IMR-90 (cell line): ENCODE measurements at regions of chr1 and their contacts with region 1.

Region 1: DNA sequence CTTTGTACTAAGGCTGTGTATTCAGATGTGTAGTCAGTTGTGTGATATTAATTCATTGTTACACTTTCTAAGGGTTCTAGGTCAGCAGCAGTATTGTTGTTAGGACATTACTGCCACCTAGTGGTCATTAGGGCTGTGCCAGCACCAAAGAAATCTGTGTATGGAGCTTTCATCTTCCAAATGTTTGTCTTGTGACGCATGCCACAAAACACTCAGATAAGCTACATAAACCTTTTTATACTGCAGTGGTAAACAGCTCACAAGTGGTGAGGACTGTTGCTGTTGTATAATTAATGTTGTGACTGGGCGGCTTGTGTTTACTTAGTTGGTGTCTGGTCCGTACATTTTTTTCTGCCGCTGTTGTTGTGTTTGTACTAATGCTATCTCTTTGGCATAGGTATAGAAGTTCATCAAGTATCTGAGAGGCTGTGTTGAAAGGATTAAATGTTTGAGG is 51.7 kb downstream of the S1PR1 start:
- DNase-seq: peak; percentile 91
- ATAC-seq: peak; percentile 90
- H3K4me3 ChIP-seq: no peak overlapping the region; the same call in 1 of the 2 replicates
- H3K27ac ChIP-seq: no peak overlapping the region
- H3K4me1 ChIP-seq: peaks cover 2% of the 10 kb centered on the region; the same call in 1 of the 2 replicates
- H3K27me3 ChIP-seq: peaks cover under 1% of the 10 kb centered on the region; the same call in 1 of the 2 replicates
- CTCF ChIP-seq: peak; percentile 96
- POLR2A ChIP-seq: 0 out of 2 replicates have a peak, but pooled peaks have one; percentile 33
- RAD21 ChIP-seq: peak; percentile 90

Region 2: GRCh38 chr1:100921109-100921706 is 367.3 kb before region 1 on chr1:
- CTCF ChIA-PET with region 1: interaction called, 15 read pairs
- POLR2A ChIA-PET with region 1: no interaction called
- dilution Hi-C with region 1: no loop called
- in situ Hi-C with region 1: loop called (anchors 5 kb)
- intact Hi-C with region 1: loop called (anchors 1 kb)
- DNase-seq: peak; percentile 65
- ATAC-seq: peak; percentile 62
- H3K4me3 ChIP-seq: no peak overlapping the region
- H3K27ac ChIP-seq: no peak overlapping the region
- H3K4me1 ChIP-seq: no peaks in the 10 kb centered on the region
- H3K27me3 ChIP-seq: no peaks in the 10 kb centered on the region
- CTCF ChIP-seq: peak; percentile 71
- POLR2A ChIP-seq: no peak
- RAD21 ChIP-seq: peak; percentile 77

Region 3: DNA sequence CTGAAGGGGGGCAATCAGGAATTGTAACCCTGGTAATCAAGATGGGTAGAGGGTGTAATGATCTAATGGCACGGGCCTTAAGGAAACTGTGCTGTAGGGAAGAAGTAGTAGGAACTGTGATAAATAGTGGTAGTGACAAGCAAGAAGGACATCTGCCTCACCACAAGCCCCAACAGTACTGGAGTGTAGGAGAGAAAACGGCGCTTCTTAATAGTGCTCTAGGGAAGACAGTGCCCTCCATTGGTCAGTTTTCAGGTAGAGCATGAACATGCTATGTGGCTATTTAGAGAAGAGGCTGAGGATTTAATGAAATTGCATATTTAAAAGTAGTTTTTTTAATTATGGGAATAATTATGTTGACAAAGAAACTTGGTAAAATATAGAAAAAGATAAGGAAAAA is 360.4 kb before region 1 on chr1:
- CTCF ChIA-PET with region 1: interaction called, 15 read pairs
- POLR2A ChIA-PET with region 1: no interaction called
- dilution Hi-C with region 1: no loop called
- in situ Hi-C with region 1: loop called (anchors 5 kb)
- intact Hi-C with region 1: no loop called
- DNase-seq: no peak
- ATAC-seq: no peak
- H3K4me3 ChIP-seq: no peak overlapping the region
- H3K27ac ChIP-seq: no peak overlapping the region
- H3K4me1 ChIP-seq: no peaks in the 10 kb centered on the region
- H3K27me3 ChIP-seq: no peaks in the 10 kb centered on the region
- CTCF ChIP-seq: no peak
- POLR2A ChIP-seq: no peak
- RAD21 ChIP-seq: no peak

Region 4: DNA sequence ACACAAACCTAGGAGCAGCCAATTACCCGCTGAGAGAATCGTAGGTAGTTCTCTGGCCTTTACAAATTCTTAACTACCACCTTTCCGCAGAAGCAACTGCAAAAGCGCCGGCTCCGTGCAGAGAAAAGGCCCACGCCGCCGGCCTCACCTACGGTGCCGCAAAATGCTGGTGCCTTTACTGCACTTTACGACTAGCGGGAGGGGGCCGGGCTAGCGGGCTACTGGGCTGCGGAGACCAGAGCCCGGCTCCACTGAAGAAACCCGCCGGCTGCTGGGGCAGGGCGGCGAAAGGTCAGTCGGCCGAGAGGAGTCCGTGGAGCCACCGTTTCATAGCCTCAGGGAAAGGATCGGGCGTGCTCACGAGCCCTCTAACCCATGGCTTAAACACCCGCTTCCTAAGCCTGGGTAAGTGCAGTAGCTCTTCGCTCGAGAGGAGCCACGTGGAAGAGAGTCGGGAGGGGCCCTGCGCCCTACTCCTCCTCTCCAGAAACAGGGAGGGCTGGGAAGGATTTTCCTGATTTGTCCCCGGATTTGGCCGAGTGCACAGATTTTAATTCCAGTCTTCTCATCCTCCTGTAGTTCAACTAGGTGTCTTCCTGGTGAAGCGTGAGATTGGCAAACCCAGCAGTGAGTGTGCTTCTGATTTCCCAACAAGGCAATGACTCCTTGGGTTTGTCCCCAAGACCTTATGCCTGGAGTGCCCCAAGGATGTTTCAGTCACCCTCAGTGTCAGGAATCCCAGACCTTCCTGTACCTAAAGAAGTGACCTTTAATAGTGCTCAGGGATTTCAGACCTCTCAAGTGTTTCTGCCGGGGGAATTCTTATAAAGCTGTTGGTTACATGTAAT is 262.6 kb before region 1 on chr1 and contains the start of gene DPH5:
- CTCF ChIA-PET with region 1: no interaction called
- POLR2A ChIA-PET with region 1: no interaction called
- dilution Hi-C with region 1: no loop called
- in situ Hi-C with region 1: no loop called
- intact Hi-C with region 1: loop called (anchors 1 kb)
- DNase-seq: peak; percentile 91
- ATAC-seq: peak; percentile 98
- H3K4me3 ChIP-seq: peak within 1 kb of the TSS; percentile 82
- H3K27ac ChIP-seq: peak within 1 kb of the TSS; percentile 97
- H3K4me1 ChIP-seq: 0 out of 2 replicates have a peak, but pooled peaks cover 2% of the 10 kb centered on the region
- H3K27me3 ChIP-seq: no peaks in the 10 kb centered on the region
- CTCF ChIP-seq: no peak
- POLR2A ChIP-seq: peak; percentile 89
- RAD21 ChIP-seq: no peak
- total RNA-seq, gene DPH5: 32.3 and 45.5 TPM in 2 replicates

Region 5: GRCh38 chr1:101136739-101137138 is 151.8 kb before region 1 on chr1:
- CTCF ChIA-PET with region 1: interaction called, 3 read pairs
- POLR2A ChIA-PET with region 1: no interaction called
- dilution Hi-C with region 1: no loop called
- in situ Hi-C with region 1: no loop called
- intact Hi-C with region 1: loop called (anchors 2 kb)
- DNase-seq: peak; percentile 19
- ATAC-seq: peak; percentile 21; the same call in 1 of the 2 replicates
- H3K4me3 ChIP-seq: no peak overlapping the region
- H3K27ac ChIP-seq: no peak overlapping the region
- H3K4me1 ChIP-seq: peaks cover 3% of the 10 kb centered on the region
- H3K27me3 ChIP-seq: no peaks in the 10 kb centered on the region
- CTCF ChIP-seq: peak; percentile 35
- POLR2A ChIP-seq: no peak
- RAD21 ChIP-seq: peak; percentile 50

Region 6: GRCh38 chr1:101474039-101474665 is 185.6 kb after region 1 on chr1:
- CTCF ChIA-PET with region 1: no interaction called
- POLR2A ChIA-PET with region 1: no interaction called
- dilution Hi-C with region 1: no loop called
- in situ Hi-C with region 1: no loop called
- intact Hi-C with region 1: no loop called
- DNase-seq: no peak
- ATAC-seq: no peak
- H3K4me3 ChIP-seq: no peak overlapping the region
- H3K27ac ChIP-seq: no peak overlapping the region
- H3K4me1 ChIP-seq: no peaks in the 10 kb centered on the region
- H3K27me3 ChIP-seq: no peaks in the 10 kb centered on the region
- CTCF ChIP-seq: peak; percentile 28; the same call in 1 of the 2 replicates
- POLR2A ChIP-seq: no peak
- RAD21 ChIP-seq: no peak